Activated CD4-positive, alpha-beta T cell treated with anti-CD3 and anti-CD28 coated beads, Interleukin-2, amount 10 ng/mL, durations not matched to agents 24 days and 14 days (primary cell): ENCODE measurements at regions of chr6 and their contacts with region 1.

Region 1: DNA sequence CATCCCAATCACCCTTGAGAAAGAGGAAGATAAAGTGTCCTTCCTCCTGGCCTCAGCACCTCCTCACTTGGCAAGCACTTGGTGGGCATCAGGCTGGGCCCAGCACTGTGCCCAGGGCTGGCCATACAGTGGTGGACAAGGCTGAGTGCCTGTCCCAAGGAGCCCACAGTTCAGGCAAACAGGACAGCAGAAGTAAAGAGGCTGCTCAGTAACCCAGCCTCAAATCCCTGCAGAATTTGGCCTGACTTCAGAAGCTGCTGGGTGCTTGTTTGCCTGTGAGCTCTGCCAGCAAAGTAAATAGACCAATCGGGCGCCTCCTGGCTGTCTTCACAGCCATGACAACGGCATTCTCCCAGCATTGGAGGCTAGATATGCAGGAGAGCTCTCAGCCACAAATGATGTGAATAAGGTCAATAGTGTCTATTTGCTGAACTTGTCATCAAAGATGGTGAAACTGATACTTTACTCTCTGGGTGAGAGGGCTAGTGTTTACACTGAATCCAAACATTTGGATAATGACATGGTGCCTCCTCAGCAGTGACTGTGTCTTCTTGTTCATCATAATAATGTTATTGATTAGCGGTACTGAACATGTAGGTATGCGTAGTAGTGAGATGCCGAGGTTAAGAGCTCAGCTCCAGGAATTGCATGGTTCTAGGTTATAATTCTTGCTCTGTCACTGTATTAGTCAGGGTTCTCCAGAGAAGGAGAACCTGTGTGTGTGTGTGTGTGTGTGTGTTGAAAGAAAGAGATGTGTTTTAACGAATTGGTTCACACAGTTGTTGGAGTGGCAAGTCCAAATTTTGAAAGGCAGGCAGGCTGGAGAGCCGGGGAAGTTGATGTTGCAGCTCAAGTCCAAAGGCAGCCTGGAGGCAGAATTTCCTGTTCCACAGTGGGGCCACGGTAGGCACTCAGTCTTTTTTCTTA is 36.8 kb upstream of the FANCE start:
- DNase-seq: peak; percentile 78
- H3K4me3 Mint-ChIP-seq: peak overlapping the region; percentile 39
- H3K27ac Mint-ChIP-seq: peak overlapping the region; percentile 64
- H3K4me1 Mint-ChIP-seq: peaks cover 65% of the 10 kb centered on the region
- H3K27me3 Mint-ChIP-seq: no peaks in the 10 kb centered on the region

Region 2: GRCh38 chr6:35370124-35370741 is 45.1 kb before region 1 on chr6:
- intact Hi-C with region 1: loop called (anchors 5 kb)
- DNase-seq: peak; percentile 78
- H3K4me3 Mint-ChIP-seq: peak overlapping the region; percentile 79
- H3K27ac Mint-ChIP-seq: peak overlapping the region; percentile 96
- H3K4me1 Mint-ChIP-seq: peaks cover 55% of the 10 kb centered on the region
- H3K27me3 Mint-ChIP-seq: no peaks in the 10 kb centered on the region

Region 3: GRCh38 chr6:35468181-35468979 is 53.1 kb after region 1 on chr6 and contains the start of gene RPL10A:
- intact Hi-C with region 1: loop called (anchors 5 kb)
- DNase-seq: peak; percentile 98
- H3K4me3 Mint-ChIP-seq: peak within 1 kb of the TSS; percentile 97
- H3K27ac Mint-ChIP-seq: peak within 1 kb of the TSS; percentile 98
- H3K4me1 Mint-ChIP-seq: peaks cover 39% of the 10 kb centered on the region
- H3K27me3 Mint-ChIP-seq: no peaks in the 10 kb centered on the region
- total RNA-seq, gene RPL10A: 1,702 and 1,710 TPM in 2 replicates